Breast epithelium (tissue), 4 donors: ENCODE measurements at regions of chr6 and their contacts with region 1.

Region 1: GRCh38 chr6:87995461-87995860 is 52.2 kb upstream of the SPACA1 start:
- DNase-seq: no peak
- H3K4me3 ChIP-seq: no peak overlapping the region
- H3K27ac ChIP-seq: no peak overlapping the region
- H3K4me1 ChIP-seq: no peaks in the 10 kb centered on the region
- H3K27me3 ChIP-seq: no peaks in the 10 kb centered on the region
- CTCF ChIP-seq: no peak
- POLR2A ChIP-seq: no peak

Region 2: GRCh38 chr6:88020439-88020838 is 25.0 kb after region 1 on chr6:
- intact Hi-C with region 1: no loop called
- DNase-seq: no peak
- H3K4me3 ChIP-seq: no peak overlapping the region
- H3K27ac ChIP-seq: no peak overlapping the region
- H3K4me1 ChIP-seq: no peaks in the 10 kb centered on the region
- H3K27me3 ChIP-seq: no peaks in the 10 kb centered on the region
- CTCF ChIP-seq: no peak
- POLR2A ChIP-seq: no peak

Region 3: DNA sequence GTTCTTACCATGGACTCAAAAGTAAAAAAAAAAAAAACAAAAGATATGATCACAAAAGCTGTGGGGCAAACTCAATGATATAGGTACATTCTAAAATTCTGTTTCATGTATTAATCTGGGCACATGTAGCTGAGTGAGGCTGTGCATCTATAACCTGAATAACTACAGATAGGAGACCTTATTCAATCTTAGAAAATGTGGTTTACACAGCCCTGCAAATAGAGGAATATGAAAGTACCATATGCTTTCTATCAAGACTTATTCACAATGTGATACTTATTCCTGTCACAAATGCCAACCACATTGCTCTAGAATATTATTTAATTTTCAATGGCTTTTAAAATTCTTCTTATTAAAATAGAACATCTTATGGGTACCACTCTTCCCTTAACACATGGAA is 49.1 kb after region 1 on chr6:
- intact Hi-C with region 1: no loop called
- DNase-seq: no peak
- H3K4me3 ChIP-seq: no peak overlapping the region
- H3K27ac ChIP-seq: no peak overlapping the region
- H3K4me1 ChIP-seq: no peaks in the 10 kb centered on the region
- H3K27me3 ChIP-seq: no peaks in the 10 kb centered on the region
- CTCF ChIP-seq: no peak
- POLR2A ChIP-seq: no peak

Region 4: GRCh38 chr6:88349511-88349910 is 354.1 kb after region 1 on chr6:
- intact Hi-C with region 1: loop called (anchors 5 kb)
- DNase-seq: no peak
- H3K4me3 ChIP-seq: no peak overlapping the region
- H3K27ac ChIP-seq: no peak overlapping the region
- H3K4me1 ChIP-seq: no peaks in the 10 kb centered on the region
- H3K27me3 ChIP-seq: no peaks in the 10 kb centered on the region
- CTCF ChIP-seq: no peak
- POLR2A ChIP-seq: no peak